Psoas muscle (tissue), 8 donors: ENCODE measurements at regions of chr5 and their contacts with region 1.

Region 1: GRCh38 chr5:156475182-156476157 is 148.5 kb downstream of the SGCD start:
- DNase-seq: peak; percentile 34 to 60
- ATAC-seq: peak; percentile 84 to 88 (median 86)
- H3K4me3 ChIP-seq: no peak overlapping the region
- H3K27ac ChIP-seq: peak overlapping the region; percentile 37
- H3K4me1 ChIP-seq: peaks cover 49% of the 10 kb centered on the region
- H3K27me3 ChIP-seq: no peaks in the 10 kb centered on the region
- CTCF ChIP-seq: no peak

Region 2: GRCh38 chr5:156359476-156359875 is 116.0 kb before region 1 on chr5:
- intact Hi-C with region 1: loop called in 1 of 2 experiments (anchors 10 kb)
- DNase-seq: no peak
- ATAC-seq: peak; percentile 54 to 87 (median 70)
- H3K4me3 ChIP-seq: no peak overlapping the region
- H3K27ac ChIP-seq: peak overlapping the region; percentile 24
- H3K4me1 ChIP-seq: peaks cover 19% of the 10 kb centered on the region
- H3K27me3 ChIP-seq: no peaks in the 10 kb centered on the region
- CTCF ChIP-seq: no peak